ENCODE measurements at regions of chr11 and their contacts with region 1.

Region 1: DNA sequence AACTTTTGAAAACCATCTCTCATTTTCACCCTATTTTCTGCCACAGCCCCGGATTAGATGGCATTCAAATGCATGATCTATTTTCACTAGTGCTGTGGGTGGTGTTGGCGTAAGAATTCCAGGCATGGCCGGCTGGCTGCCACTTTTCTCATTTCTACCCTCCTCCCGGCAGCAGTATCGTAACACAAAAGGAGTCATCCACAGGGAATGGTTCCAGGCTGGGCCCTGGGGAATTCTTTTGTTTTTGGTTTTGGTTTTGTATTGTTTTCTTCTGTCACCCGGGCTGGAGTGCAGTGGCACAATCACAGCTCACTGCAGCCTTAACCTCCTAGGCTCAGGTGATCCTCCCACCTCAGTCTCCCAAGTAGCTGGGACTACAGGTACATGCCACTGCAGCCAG is 13.8 kb downstream of the JAML start:
- DNase-seq: no peak
- ATAC-seq: no peak
- H3K4me3 ChIP-seq: no peak overlapping the region
- H3K27ac ChIP-seq: no peak overlapping the region
- H3K4me1 ChIP-seq: peaks cover 29% of the 10 kb centered on the region
- H3K27me3 ChIP-seq: no peaks in the 10 kb centered on the region
- CTCF ChIP-seq: no peak
- EP300 ChIP-seq: no peak
- POLR2A ChIP-seq: no peak
- RAD21 ChIP-seq: no peak

Region 2: GRCh38 chr11:117979481-117980211 is 231.4 kb before region 1 on chr11:
- CTCF ChIA-PET with region 1: no interaction called
- POLR2A ChIA-PET with region 1: no interaction called
- RAD21 ChIA-PET with region 1: no interaction called
- SMC1A ChIA-PET with region 1: no interaction called
- in situ Hi-C with region 1: no loop called
- intact Hi-C with region 1: no loop called
- DNase-seq: peak; percentile 82
- ATAC-seq: peak; percentile 91
- H3K4me3 ChIP-seq: no peak overlapping the region
- H3K27ac ChIP-seq: 0 out of 2 replicates have a peak overlapping the region, but pooled peaks have one; percentile 20
- H3K4me1 ChIP-seq: peaks cover 18% of the 10 kb centered on the region
- H3K27me3 ChIP-seq: no peaks in the 10 kb centered on the region
- CTCF ChIP-seq: no peak
- EP300 ChIP-seq: no peak
- POLR2A ChIP-seq: no peak
- RAD21 ChIP-seq: no peak

Region 3: GRCh38 chr11:118251858-118252652 is 41.0 kb after region 1 on chr11 and contains the start of gene MPZL3:
- CTCF ChIA-PET with region 1: interaction called, 8 read pairs
- POLR2A ChIA-PET with region 1: interaction called, 6 read pairs
- RAD21 ChIA-PET with region 1: interaction called, 9 read pairs
- SMC1A ChIA-PET with region 1: interaction called, 16 read pairs
- in situ Hi-C with region 1: no loop called
- intact Hi-C with region 1: no loop called
- DNase-seq: peak; percentile 85
- ATAC-seq: peak; percentile 81
- H3K4me3 ChIP-seq: peak within 1 kb of the TSS; percentile 83
- H3K27ac ChIP-seq: peak within 1 kb of the TSS; percentile 87
- H3K4me1 ChIP-seq: no peaks in the 10 kb centered on the region
- H3K27me3 ChIP-seq: no peaks in the 10 kb centered on the region
- CTCF ChIP-seq: no peak
- EP300 ChIP-seq: peak in 1 of 2 experiments; percentile 17; a peak in 1 of 4 replicates
- POLR2A ChIP-seq: peak; percentile 80
- RAD21 ChIP-seq: no peak
- polyA plus RNA-seq, gene MPZL3: 2.1 to 7.5 TPM